ENCODE measurements at regions of chr1 and their contacts with region 1.

Region 1: GRCh38 chr1:157992031-157992832 is 1.2 kb upstream of the KIRREL1 start:
- DNase-seq: peak; percentile 87
- H3K4me3 Mint-ChIP-seq: peak overlapping the region; percentile 72
- H3K27ac Mint-ChIP-seq: no peak overlapping the region
- H3K4me1 Mint-ChIP-seq: peaks cover 35% of the 10 kb centered on the region
- H3K27me3 Mint-ChIP-seq: no peaks in the 10 kb centered on the region
- CTCF ChIP-seq: peak; percentile 99

Region 2: DNA sequence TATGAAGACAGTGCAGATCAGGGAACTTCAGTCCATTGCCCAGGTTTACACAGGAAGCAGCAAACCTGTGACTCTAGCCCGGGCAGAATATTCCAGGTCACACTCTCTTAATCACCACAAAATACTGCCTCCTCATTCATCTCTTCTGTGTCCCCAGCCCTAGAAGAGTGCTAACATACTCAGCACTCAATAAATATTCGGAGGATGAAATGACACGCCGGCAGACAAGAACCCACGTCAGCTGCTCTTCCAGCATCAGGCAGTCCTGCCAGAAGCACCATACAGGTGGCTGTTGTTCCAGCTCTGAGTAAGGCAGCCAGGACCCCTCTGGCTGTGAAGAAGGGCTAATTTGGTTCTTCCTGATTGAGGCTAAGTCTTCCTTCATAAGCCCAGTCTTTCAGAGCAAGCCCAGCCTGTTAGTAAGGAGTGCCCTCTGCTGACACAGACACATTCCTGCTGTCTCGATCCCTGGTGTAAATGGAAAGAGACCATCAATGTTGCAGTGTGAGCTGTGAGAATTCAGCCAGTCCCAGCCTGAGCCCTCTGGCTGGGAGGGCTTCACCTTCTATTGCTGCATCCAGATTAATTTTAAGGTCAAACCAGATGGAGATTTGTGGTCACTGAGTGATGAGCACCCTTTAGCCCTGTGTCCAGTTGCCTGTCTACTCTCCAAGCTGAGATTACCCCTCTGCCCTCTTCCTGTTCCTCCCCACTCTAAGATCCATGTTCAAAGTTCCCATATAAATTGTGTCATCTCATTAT is 43.7 kb before region 1 on chr1:
- CTCF ChIA-PET with region 1: interaction called, 29 read pairs
- POLR2A ChIA-PET with region 1: no interaction called
- intact Hi-C with region 1: no loop called
- DNase-seq: peak; percentile 65
- H3K4me3 Mint-ChIP-seq: no peak overlapping the region
- H3K27ac Mint-ChIP-seq: no peak overlapping the region
- H3K4me1 Mint-ChIP-seq: no peaks in the 10 kb centered on the region
- H3K27me3 Mint-ChIP-seq: peaks cover 84% of the 10 kb centered on the region
- CTCF ChIP-seq: peak; percentile 88

Region 3: GRCh38 chr1:157978586-157979403 is 13.4 kb before region 1 on chr1:
- CTCF ChIA-PET with region 1: interaction called, 746 read pairs
- POLR2A ChIA-PET with region 1: interaction called, 3 read pairs
- intact Hi-C with region 1: no loop called
- DNase-seq: no peak
- H3K4me3 Mint-ChIP-seq: no peak overlapping the region
- H3K27ac Mint-ChIP-seq: no peak overlapping the region
- H3K4me1 Mint-ChIP-seq: no peaks in the 10 kb centered on the region
- H3K27me3 Mint-ChIP-seq: no peaks in the 10 kb centered on the region
- CTCF ChIP-seq: no peak

Region 4: DNA sequence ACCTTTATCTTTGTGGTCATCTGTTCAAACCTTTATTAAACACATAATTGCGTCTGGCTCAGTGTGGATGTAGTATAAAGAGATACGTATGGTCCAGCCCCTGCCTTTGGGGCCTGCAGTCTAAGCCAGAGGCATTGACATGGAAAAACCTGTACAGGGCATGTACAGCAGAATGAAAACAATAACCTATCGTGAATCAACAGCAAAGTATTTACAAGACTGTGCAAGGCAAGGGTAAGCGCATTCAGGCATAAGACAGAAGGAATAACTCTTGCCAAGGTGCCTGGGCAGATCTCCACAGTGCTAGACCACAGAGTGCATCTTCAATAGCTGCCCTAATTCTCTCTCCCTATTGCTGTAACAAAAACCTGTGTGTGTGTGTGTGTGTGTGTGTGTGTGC is 36.7 kb after region 1 on chr1:
- CTCF ChIA-PET with region 1: interaction called, 603 read pairs
- POLR2A ChIA-PET with region 1: interaction called, 114 read pairs
- intact Hi-C with region 1: no loop called
- DNase-seq: peak; percentile 72
- H3K4me3 Mint-ChIP-seq: no peak overlapping the region
- H3K27ac Mint-ChIP-seq: peak overlapping the region; percentile 63
- H3K4me1 Mint-ChIP-seq: peaks cover 42% of the 10 kb centered on the region
- H3K27me3 Mint-ChIP-seq: no peaks in the 10 kb centered on the region
- CTCF ChIP-seq: no peak

Region 5: GRCh38 chr1:158055854-158056253 is 63.6 kb after region 1 on chr1:
- CTCF ChIA-PET with region 1: interaction called, 35 read pairs
- POLR2A ChIA-PET with region 1: no interaction called
- intact Hi-C with region 1: no loop called
- DNase-seq: no peak
- H3K4me3 Mint-ChIP-seq: no peak overlapping the region
- H3K27ac Mint-ChIP-seq: no peak overlapping the region
- H3K4me1 Mint-ChIP-seq: peaks cover 27% of the 10 kb centered on the region
- H3K27me3 Mint-ChIP-seq: no peaks in the 10 kb centered on the region
- CTCF ChIP-seq: no peak

Region 6: DNA sequence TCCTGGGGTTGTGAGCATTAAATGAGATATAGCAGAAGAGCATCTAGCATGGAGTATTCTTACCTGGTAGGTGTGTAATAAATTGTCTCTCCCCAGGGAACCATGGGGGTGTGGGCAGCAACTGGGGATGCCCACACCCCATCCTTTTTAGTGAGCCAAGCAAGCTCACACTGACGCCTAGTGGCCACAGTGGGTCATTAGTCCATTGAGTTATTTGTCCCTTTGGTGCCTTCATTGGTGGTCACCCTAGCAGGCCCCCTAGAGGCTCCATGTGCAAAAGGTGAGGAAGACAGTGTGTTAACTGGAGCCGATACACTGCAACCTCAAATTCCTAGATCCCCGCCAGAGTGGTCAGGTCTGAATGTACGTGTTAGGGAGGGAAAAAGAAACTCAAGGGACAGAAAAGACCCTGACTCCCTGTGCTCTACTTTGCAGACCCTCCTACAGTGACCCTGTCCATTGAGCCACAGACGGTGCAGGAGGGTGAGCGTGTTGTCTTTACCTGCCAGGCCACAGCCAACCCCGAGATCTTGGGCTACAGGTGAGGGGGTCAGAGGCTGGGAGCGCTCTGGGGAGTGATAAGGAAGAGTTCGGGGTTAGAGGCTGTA is 95.2 kb after region 1 on chr1:
- CTCF ChIA-PET with region 1: interaction called, 286 read pairs
- POLR2A ChIA-PET with region 1: interaction called, 7 read pairs
- intact Hi-C with region 1: loop called (anchors 1 kb)
- DNase-seq: peak; percentile 85
- H3K4me3 Mint-ChIP-seq: no peak overlapping the region
- H3K27ac Mint-ChIP-seq: no peak overlapping the region
- H3K4me1 Mint-ChIP-seq: no peaks in the 10 kb centered on the region
- H3K27me3 Mint-ChIP-seq: no peaks in the 10 kb centered on the region
- CTCF ChIP-seq: peak; percentile 98

Region 7: GRCh38 chr1:158203693-158204457 is 211.6 kb after region 1 on chr1:
- CTCF ChIA-PET with region 1: interaction called, 13 read pairs
- POLR2A ChIA-PET with region 1: no interaction called
- intact Hi-C with region 1: no loop called
- DNase-seq: peak; percentile 84
- H3K4me3 Mint-ChIP-seq: no peak overlapping the region
- H3K27ac Mint-ChIP-seq: no peak overlapping the region
- H3K4me1 Mint-ChIP-seq: no peaks in the 10 kb centered on the region
- H3K27me3 Mint-ChIP-seq: peaks cover 81% of the 10 kb centered on the region
- CTCF ChIP-seq: peak; percentile 83